SK-N-SH (cell line): ENCODE measurements at regions of chr2 and their contacts with region 1.

Region 1: GRCh38 chr2:25362049-25362433 is 20.3 kb upstream of the DNMT3A start:
- DNase-seq: peak; percentile 98
- H3K4me3 ChIP-seq: peak overlapping the region; percentile 18 to 30
- H3K27ac ChIP-seq: peak overlapping the region in 1 of 2 experiments; percentile 35; a peak in 1 of 4 replicates
- H3K4me1 ChIP-seq: peaks cover 0 to 24% of the 10 kb centered on the region in 2 experiments; a peak in 2 of 4 replicates
- H3K27me3 ChIP-seq: no peaks in the 10 kb centered on the region
- CTCF ChIP-seq: peak; percentile 98
- EP300 ChIP-seq: no peak
- RAD21 ChIP-seq: peak; percentile 65

Region 2: DNA sequence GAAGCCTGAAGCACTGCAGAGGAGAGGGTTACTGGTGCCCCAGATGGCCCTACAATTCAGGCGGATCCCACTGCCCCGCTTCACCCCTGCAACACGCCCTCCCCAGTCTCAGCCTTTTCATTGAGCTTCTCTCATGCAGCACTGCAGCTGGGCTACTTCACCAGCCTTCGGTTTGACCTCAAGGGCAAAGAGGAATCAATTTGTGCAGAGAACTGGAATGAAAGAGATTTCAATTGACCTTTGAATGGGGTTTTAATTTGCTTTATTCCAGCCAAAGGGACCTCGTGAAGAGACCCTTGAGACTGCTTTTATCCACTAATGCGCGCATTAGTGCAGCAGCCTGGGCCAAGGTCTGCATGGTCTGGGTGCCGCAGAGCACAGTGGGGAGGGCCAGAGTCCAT is 184.8 kb before region 1 on chr2:
- CTCF ChIA-PET with region 1: no interaction called
- POLR2A ChIA-PET with region 1: no interaction called
- DNase-seq: peak; percentile 72
- H3K4me3 ChIP-seq: no peak overlapping the region
- H3K27ac ChIP-seq: no peak overlapping the region
- H3K4me1 ChIP-seq: peaks cover 0 to 6% of the 10 kb centered on the region in 2 experiments; a peak in 1 of 4 replicates
- H3K27me3 ChIP-seq: peaks cover 22% of the 10 kb centered on the region
- CTCF ChIP-seq: no peak
- EP300 ChIP-seq: no peak
- RAD21 ChIP-seq: no peak

Region 3: GRCh38 chr2:25309402-25309801 is 52.6 kb before region 1 on chr2:
- CTCF ChIA-PET with region 1: interaction called, 13 read pairs
- POLR2A ChIA-PET with region 1: interaction called, 4 read pairs
- DNase-seq: peak; percentile 85
- H3K4me3 ChIP-seq: no peak overlapping the region; a peak in 1 of 4 replicates
- H3K27ac ChIP-seq: peak overlapping the region in 1 of 2 experiments; percentile 53; a peak in 1 of 4 replicates
- H3K4me1 ChIP-seq: peaks cover 13 to 99% of the 10 kb centered on the region in 2 experiments; a peak in 3 of 4 replicates
- H3K27me3 ChIP-seq: no peaks in the 10 kb centered on the region
- CTCF ChIP-seq: peak; percentile 66
- EP300 ChIP-seq: no peak
- RAD21 ChIP-seq: peak; percentile 74

Region 4: GRCh38 chr2:25331686-25332365 is 30.2 kb before region 1 on chr2:
- CTCF ChIA-PET with region 1: interaction called, 18 read pairs
- POLR2A ChIA-PET with region 1: interaction called, 3 read pairs
- DNase-seq: no peak
- H3K4me3 ChIP-seq: no peak overlapping the region
- H3K27ac ChIP-seq: peak overlapping the region in 1 of 2 experiments; percentile 77; a peak in 1 of 4 replicates
- H3K4me1 ChIP-seq: peaks cover 0 to 67% of the 10 kb centered on the region in 2 experiments; a peak in 2 of 4 replicates
- H3K27me3 ChIP-seq: no peaks in the 10 kb centered on the region
- CTCF ChIP-seq: no peak
- EP300 ChIP-seq: no peak
- RAD21 ChIP-seq: no peak

Region 5: DNA sequence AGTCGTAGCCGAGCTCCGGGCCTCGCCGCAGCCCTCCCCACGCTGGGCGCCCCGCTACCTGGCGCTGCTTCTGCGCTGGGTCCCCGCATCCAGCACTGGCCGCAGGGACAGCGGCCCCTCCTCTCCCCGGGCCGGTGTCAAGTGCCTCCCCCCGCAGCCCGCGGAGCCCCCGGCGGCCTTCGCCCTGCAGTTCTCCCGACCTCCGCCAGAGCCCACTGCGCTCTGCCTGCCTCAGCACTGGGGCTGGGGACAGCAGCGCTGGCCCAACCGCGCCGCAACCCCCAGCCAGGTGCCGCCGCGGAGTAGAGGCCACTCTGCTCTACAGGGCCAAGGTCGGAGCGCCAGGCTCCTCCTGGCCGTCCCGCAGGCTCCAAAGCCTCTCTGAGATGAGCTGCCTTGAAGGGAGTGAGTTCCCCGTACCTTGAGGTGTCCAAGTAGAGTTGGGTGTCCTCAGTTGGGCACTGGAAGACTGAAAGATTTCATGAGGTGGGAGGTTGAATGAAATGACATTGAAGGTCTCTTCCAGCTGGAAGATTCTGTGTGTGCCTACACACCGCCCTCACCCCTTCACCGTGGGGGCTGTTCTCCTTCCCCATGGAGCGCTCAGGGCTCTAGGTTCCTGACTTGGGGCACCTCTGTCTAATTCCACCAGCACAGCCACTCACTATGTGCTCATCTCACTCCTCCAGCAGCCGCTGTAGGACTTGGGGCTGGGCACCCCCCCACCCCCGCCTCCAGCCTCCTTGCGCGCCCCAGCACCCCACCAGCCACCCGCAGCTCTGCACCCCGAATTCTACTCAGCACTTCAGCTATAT is 19.5 kb before region 1 on chr2:
- CTCF ChIA-PET with region 1: interaction called, 57 read pairs
- POLR2A ChIA-PET with region 1: interaction called, 4 read pairs
- DNase-seq: peak; percentile 99
- H3K4me3 ChIP-seq: peak overlapping the region; percentile 82 to 87
- H3K27ac ChIP-seq: peak overlapping the region in 1 of 2 experiments; percentile 93; a peak in 2 of 4 replicates
- H3K4me1 ChIP-seq: peaks cover 10 to 35% of the 10 kb centered on the region in 2 experiments; a peak in 2 of 4 replicates
- H3K27me3 ChIP-seq: no peaks in the 10 kb centered on the region
- CTCF ChIP-seq: peak; percentile 84
- EP300 ChIP-seq: peak in 1 of 2 experiments; percentile 38; a peak in 1 of 4 replicates
- RAD21 ChIP-seq: peak; percentile 83

Region 6: DNA sequence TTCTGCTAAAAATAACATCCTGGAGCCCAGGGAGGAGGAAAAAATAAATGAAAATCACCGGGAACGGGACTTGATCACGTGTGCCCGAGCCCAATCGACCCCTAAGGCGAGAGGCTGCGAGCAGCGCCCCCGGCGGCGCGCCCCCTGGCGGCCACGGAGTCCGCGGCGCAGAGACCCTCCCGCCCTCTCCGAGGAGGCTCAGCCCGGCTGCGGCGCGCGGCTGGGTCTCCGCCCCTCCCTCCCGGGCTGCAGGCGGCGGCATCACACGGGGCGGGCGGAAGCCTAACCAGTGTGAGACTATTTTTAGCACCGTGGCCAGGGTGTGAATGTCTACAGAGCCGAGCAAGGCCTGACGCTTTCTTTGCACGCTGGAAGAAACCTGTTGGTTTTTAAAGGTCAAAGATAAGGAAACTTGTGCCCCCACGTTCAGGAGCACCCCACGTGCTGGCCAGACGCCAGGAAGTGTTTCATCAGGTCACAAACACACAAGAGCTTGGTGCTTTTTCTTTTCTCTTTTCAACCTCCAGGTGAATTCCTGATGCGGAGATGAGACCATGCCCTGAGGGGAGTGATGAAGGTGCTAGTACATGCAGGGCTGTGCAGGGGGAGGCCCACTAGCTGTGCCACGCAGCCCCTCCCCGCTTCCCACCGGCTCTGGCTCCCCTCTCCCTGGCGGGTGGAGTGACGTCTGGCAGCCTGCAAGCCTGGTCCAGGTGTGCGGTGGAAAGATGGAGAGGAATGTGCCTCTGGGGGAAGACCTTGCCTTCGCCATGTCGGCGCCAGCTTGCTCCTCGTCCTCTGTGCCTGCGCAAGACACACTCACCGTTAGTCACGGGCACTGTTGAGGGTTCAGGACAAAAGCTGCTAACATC is 14.9 kb after region 1 on chr2:
- CTCF ChIA-PET with region 1: interaction called, 71 read pairs
- POLR2A ChIA-PET with region 1: interaction called, 3 read pairs
- DNase-seq: peak; percentile 99
- H3K4me3 ChIP-seq: peak overlapping the region; percentile 21 to 45; a peak in 3 of 4 replicates
- H3K27ac ChIP-seq: peak overlapping the region in 1 of 2 experiments; percentile 70; a peak in 2 of 4 replicates
- H3K4me1 ChIP-seq: peaks cover 5 to 36% of the 10 kb centered on the region in 2 experiments; a peak in 3 of 4 replicates
- H3K27me3 ChIP-seq: no peaks in the 10 kb centered on the region
- CTCF ChIP-seq: peak; percentile 99
- EP300 ChIP-seq: no peak
- RAD21 ChIP-seq: peak; percentile 73

Region 7: DNA sequence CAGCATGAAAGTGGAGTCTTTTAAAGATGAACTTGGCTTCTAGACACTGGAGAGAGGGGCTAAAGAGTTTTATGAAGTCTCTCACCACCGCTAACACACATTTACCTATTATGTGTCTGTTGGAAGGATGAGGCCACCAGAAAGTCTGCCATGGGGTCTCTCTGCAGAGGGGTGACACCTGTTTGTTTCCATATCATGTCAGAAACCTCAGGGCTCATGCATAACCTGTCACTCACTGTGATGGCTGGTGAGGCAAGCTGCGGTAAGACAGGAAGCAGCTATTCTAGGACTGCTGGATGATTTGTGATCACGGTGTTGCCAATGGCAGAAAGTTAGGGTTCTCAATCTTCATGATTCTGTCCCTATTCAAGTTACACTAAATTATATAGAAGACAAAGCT is 40.4 kb after region 1 on chr2:
- CTCF ChIA-PET with region 1: interaction called, 10 read pairs
- POLR2A ChIA-PET with region 1: no interaction called
- DNase-seq: no peak
- H3K4me3 ChIP-seq: no peak overlapping the region
- H3K27ac ChIP-seq: no peak overlapping the region
- H3K4me1 ChIP-seq: peaks cover 6 to 38% of the 10 kb centered on the region in 2 experiments; a peak in 2 of 4 replicates
- H3K27me3 ChIP-seq: no peaks in the 10 kb centered on the region
- CTCF ChIP-seq: no peak
- EP300 ChIP-seq: no peak
- RAD21 ChIP-seq: no peak

Region 8: GRCh38 chr2:25567406-25567805 is 205.4 kb after region 1 on chr2:
- CTCF ChIA-PET with region 1: interaction called, 12 read pairs
- POLR2A ChIA-PET with region 1: no interaction called
- DNase-seq: peak; percentile 55
- H3K4me3 ChIP-seq: no peak overlapping the region; a peak in 1 of 4 replicates
- H3K27ac ChIP-seq: no peak overlapping the region
- H3K4me1 ChIP-seq: peaks cover 0 to 7% of the 10 kb centered on the region in 2 experiments; a peak in 1 of 4 replicates
- H3K27me3 ChIP-seq: no peaks in the 10 kb centered on the region
- CTCF ChIP-seq: peak; percentile 78
- EP300 ChIP-seq: no peak
- RAD21 ChIP-seq: peak; percentile 81